ENCODE measurements at regions of chr10 and their contacts with region 1.

Region 1: GRCh38 chr10:43273543-43273942 is 6.7 kb upstream of the RASGEF1A start:
- DNase-seq: no peak
- H3K4me3 ChIP-seq: no peak overlapping the region
- H3K27ac ChIP-seq: no peak overlapping the region
- H3K4me1 ChIP-seq: no peaks in the 10 kb centered on the region
- H3K27me3 ChIP-seq: no peaks in the 10 kb centered on the region
- CTCF ChIP-seq: no peak

Region 2: GRCh38 chr10:43039624-43040481 is 233.7 kb before region 1 on chr10:
- intact Hi-C with region 1: no loop called
- DNase-seq: peak in 1 of 2 donors; percentile 53
- H3K4me3 ChIP-seq: no peak overlapping the region
- H3K27ac ChIP-seq: no peak overlapping the region
- H3K4me1 ChIP-seq: no peaks in the 10 kb centered on the region
- H3K27me3 ChIP-seq: no peaks in the 10 kb centered on the region
- CTCF ChIP-seq: no peak

Region 3: GRCh38 chr10:43211030-43211429 is 62.5 kb before region 1 on chr10:
- intact Hi-C with region 1: loop called (anchors 10 kb)
- DNase-seq: no peak
- H3K4me3 ChIP-seq: no peak overlapping the region
- H3K27ac ChIP-seq: no peak overlapping the region
- H3K4me1 ChIP-seq: no peaks in the 10 kb centered on the region
- H3K27me3 ChIP-seq: no peaks in the 10 kb centered on the region
- CTCF ChIP-seq: no peak

Region 4: DNA sequence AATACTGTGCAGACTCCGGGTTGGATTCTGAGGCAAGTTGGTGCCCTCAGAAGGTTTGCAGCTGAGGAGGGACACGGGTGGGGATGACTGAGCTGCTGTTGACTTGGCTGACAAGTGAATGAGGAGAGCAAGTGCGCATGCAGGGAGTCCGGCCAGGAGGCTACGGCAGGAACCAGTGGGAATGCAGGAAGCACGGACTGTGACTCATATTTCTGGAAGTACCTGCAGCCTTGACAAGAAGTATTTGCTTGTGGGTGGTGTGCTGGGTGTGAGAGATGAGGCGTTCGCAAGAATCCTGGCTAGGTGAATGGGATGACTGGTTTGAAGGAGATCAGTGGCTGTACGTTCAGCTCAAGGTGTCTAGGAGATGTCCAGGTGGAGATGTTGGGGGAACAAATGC is 67.1 kb after region 1 on chr10:
- intact Hi-C with region 1: no loop called
- DNase-seq: no peak
- H3K4me3 ChIP-seq: no peak overlapping the region
- H3K27ac ChIP-seq: no peak overlapping the region
- H3K4me1 ChIP-seq: no peaks in the 10 kb centered on the region
- H3K27me3 ChIP-seq: no peaks in the 10 kb centered on the region
- CTCF ChIP-seq: no peak